Left lung (tissue), 14 donors: ENCODE measurements at regions of chr4 and their contacts with region 1.

Region 1: DNA sequence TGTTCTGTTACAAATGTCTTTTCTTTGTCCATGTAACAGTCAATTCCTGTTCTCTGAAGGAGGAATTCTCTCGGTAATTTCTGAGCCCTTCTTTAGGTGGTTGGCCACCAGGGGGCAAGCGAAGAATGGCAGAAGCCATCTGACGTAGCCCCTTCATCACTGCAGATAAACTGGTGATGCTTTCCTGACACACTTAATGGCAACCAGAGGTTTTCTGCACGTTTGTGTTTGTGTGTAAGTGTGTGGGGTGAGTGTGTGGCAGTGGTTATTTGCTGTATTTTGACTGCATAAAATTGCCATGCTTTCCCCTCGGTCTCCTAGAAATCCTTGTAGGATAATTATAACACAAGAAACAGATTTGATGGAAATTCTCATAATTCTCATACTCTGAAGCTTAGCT is 64.8 kb upstream of the STOX2 start:
- DNase-seq: peak in 3 of 4 donors; percentile 64 to 89 (median 79)
- ATAC-seq: peak; percentile 90
- H3K4me3 ChIP-seq: no peak overlapping the region
- H3K27ac ChIP-seq: no peak overlapping the region
- H3K4me1 ChIP-seq: peaks cover 0 to 3% of the 10 kb centered on the region in 2 donors
- H3K27me3 ChIP-seq: no peaks in the 10 kb centered on the region
- CTCF ChIP-seq: peak; percentile 65 to 73

Region 2: DNA sequence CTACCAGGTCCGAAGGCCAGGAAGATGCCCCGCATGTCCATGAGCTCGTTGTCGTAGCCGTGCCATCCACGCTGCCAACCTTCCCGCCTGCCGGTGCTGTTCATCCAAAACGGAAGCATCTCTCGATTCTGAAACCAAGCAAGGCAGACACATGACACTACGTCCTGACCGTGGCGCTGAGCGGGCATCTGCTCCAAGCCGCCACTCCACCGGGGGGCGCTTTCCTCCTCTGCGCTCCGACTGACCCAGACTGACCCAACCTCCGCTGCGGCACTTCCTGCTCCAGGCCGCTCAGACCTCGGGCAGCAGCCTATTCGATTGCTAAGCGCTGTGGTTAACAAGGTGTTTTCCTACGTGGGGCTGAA is 256.9 kb after region 1 on chr4:
- intact Hi-C with region 1: loop called in 1 of 2 experiments (anchors 5 kb)
- DNase-seq: peak in 3 of 4 donors; percentile 49 to 88 (median 54)
- ATAC-seq: peak; percentile 62
- H3K4me3 ChIP-seq: peak overlapping the region; percentile 2 to 21
- H3K27ac ChIP-seq: no peak overlapping the region
- H3K4me1 ChIP-seq: peaks cover 11 to 23% of the 10 kb centered on the region in 2 donors
- H3K27me3 ChIP-seq: no peaks in the 10 kb centered on the region
- CTCF ChIP-seq: peak in 1 of 2 donors; percentile 33

Region 3: GRCh38 chr4:184163813-184164212 is 323.5 kb after region 1 on chr4:
- intact Hi-C with region 1: loop called in 1 of 2 experiments (anchors 2 kb)
- DNase-seq: peak; percentile 53 to 85 (median 66)
- ATAC-seq: peak; percentile 95
- H3K4me3 ChIP-seq: no peak overlapping the region
- H3K27ac ChIP-seq: no peak overlapping the region
- H3K4me1 ChIP-seq: peaks cover 0 to 11% of the 10 kb centered on the region in 2 donors
- H3K27me3 ChIP-seq: peaks cover 0 to 40% of the 10 kb centered on the region in 2 donors
- CTCF ChIP-seq: peak; percentile 52 to 56

Region 4: GRCh38 chr4:184563621-184564020 is 723.3 kb after region 1 on chr4:
- intact Hi-C with region 1: no loop called
- DNase-seq: no peak
- ATAC-seq: no peak
- H3K4me3 ChIP-seq: no peak overlapping the region
- H3K27ac ChIP-seq: no peak overlapping the region
- H3K4me1 ChIP-seq: no peaks in the 10 kb centered on the region
- H3K27me3 ChIP-seq: no peaks in the 10 kb centered on the region
- CTCF ChIP-seq: no peak